CD8-positive, alpha-beta T cell (primary cell): ENCODE measurements at regions of chr9 and their contacts with region 1.

Region 1: GRCh38 chr9:20570756-20571155 is 51.5 kb downstream of the MLLT3 start:
- DNase-seq: no peak
- ATAC-seq: no peak
- H3K4me3 ChIP-seq: no peak overlapping the region
- H3K4me3 Mint-ChIP-seq: no peak overlapping the region
- H3K27ac ChIP-seq: no peak overlapping the region
- H3K27ac Mint-ChIP-seq: no peak overlapping the region
- H3K4me1 ChIP-seq: peaks cover 6% of the 10 kb centered on the region
- H3K4me1 Mint-ChIP-seq: peaks cover 71% of the 10 kb centered on the region
- H3K27me3 ChIP-seq: no peaks in the 10 kb centered on the region
- H3K27me3 Mint-ChIP-seq: no peaks in the 10 kb centered on the region
- CTCF ChIP-seq: no peak

Region 2: DNA sequence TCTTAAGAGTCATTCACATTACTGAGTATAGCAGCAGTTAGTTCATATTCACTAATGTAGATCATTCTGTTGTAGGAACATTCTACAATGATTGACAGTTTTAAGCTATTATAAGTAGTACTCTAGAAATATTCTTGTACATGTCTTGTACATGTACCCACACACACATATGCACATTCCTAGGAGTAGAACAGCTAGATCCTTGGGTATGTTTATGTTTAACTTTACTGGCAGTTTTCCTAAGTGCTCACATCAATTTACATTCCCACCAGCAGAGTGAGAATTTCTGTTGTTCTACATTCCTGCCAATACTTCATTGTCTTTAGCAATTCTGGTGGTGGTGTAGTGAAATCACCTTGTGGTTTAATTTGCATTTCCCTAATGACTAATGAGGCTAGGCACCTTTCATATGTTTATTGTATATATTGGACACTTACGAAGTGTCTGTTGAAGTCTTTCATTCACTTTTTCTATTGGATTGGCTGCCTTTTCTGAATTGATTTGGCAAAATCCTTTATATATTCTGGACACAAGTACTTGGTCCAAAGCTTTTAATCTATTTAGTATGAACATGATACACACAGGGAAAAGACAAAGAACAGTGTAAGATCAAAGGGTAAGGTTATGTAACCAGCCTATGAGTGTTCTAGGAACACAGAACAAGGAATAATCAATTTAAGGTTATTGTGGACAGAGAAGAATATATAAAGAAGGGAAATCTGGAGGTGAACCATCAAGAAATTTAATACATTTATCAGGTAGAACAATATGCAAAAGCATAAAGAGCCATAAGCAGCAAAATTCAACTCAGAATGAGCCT is 44.0 kb before region 1 on chr9:
- CTCF ChIA-PET with region 1: no interaction called
- POLR2A ChIA-PET with region 1: no interaction called
- intact Hi-C with region 1: loop called in 1 of 2 experiments (anchors 1 kb)
- DNase-seq: no peak
- ATAC-seq: no peak
- H3K4me3 ChIP-seq: no peak overlapping the region
- H3K4me3 Mint-ChIP-seq: no peak overlapping the region
- H3K27ac ChIP-seq: no peak overlapping the region
- H3K27ac Mint-ChIP-seq: peak overlapping the region; percentile 29
- H3K4me1 ChIP-seq: peaks cover 41% of the 10 kb centered on the region
- H3K4me1 Mint-ChIP-seq: peaks cover 84% of the 10 kb centered on the region
- H3K27me3 ChIP-seq: no peaks in the 10 kb centered on the region
- H3K27me3 Mint-ChIP-seq: no peaks in the 10 kb centered on the region
- CTCF ChIP-seq: no peak

Region 3: DNA sequence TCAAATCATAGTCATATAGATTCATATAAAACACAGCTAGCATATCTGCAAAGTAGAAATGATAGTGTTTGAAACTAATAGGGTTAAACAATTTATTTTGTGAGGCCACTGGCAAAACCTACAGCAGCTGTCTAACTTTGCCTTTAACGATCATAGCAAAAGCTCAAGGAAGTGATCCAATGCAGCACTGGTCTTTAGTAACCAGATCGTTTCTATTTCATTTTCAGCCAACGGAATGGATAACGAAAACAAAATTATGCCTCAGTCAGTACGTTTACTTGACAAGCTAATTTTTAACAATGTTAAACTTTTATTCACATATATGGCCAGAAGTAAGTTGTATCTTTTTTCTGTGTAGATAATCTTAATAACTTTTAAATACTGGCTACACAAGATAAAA is 33.8 kb after region 1 on chr9:
- CTCF ChIA-PET with region 1: no interaction called
- POLR2A ChIA-PET with region 1: no interaction called
- intact Hi-C with region 1: loop called in 1 of 2 experiments (anchors 5 kb)
- DNase-seq: peak in 2 of 9 experiments; percentile 13 to 38
- ATAC-seq: peak; percentile 59
- H3K4me3 ChIP-seq: no peak overlapping the region
- H3K4me3 Mint-ChIP-seq: peak overlapping the region; percentile 55
- H3K27ac ChIP-seq: no peak overlapping the region
- H3K27ac Mint-ChIP-seq: peak overlapping the region; percentile 53
- H3K4me1 ChIP-seq: peaks cover 35% of the 10 kb centered on the region
- H3K4me1 Mint-ChIP-seq: peaks cover 83% of the 10 kb centered on the region
- H3K27me3 ChIP-seq: no peaks in the 10 kb centered on the region
- H3K27me3 Mint-ChIP-seq: no peaks in the 10 kb centered on the region
- CTCF ChIP-seq: no peak